Body of pancreas (tissue), 4 donors: ENCODE measurements at regions of chr2 and their contacts with region 1.

Region 1: GRCh38 chr2:234135720-234136221 is 85.3 kb downstream of the SPP2 start:
- DNase-seq: peak; percentile 50 to 58 (median 54)
- ATAC-seq: peak; percentile 72
- H3K4me3 ChIP-seq: no peak overlapping the region
- H3K27ac ChIP-seq: no peak overlapping the region
- H3K4me1 ChIP-seq: peaks cover 12% of the 10 kb centered on the region
- H3K27me3 ChIP-seq: no peaks in the 10 kb centered on the region
- CTCF ChIP-seq: peak; percentile 34 to 79 (median 74)
- POLR2A ChIP-seq: no peak

Region 2: GRCh38 chr2:234496835-234497591 is 361.2 kb after region 1 on chr2 and contains the start of gene ARL4C:
- intact Hi-C with region 1: loop called (anchors 5 kb)
- DNase-seq: peak; percentile 73 to 81 (median 76)
- ATAC-seq: peak; percentile 87
- H3K4me3 ChIP-seq: peak within 1 kb of the TSS; percentile 43 to 54
- H3K27ac ChIP-seq: peak within 1 kb of the TSS; percentile 13 to 84 (median 75)
- H3K4me1 ChIP-seq: peaks cover 10% of the 10 kb centered on the region
- H3K27me3 ChIP-seq: no peaks in the 10 kb centered on the region
- CTCF ChIP-seq: no peak
- POLR2A ChIP-seq: peak; percentile 40 to 62 (median 49)
- total RNA-seq, gene ARL4C: 6.6 to 7.8 TPM

Region 3: GRCh38 chr2:234544659-234545611 is 409.2 kb after region 1 on chr2:
- intact Hi-C with region 1: loop called (anchors 10 kb)
- DNase-seq: peak; percentile 54 to 74 (median 70)
- ATAC-seq: peak; percentile 83
- H3K4me3 ChIP-seq: no peak overlapping the region
- H3K27ac ChIP-seq: no peak overlapping the region
- H3K4me1 ChIP-seq: peaks cover 6% of the 10 kb centered on the region
- H3K27me3 ChIP-seq: no peaks in the 10 kb centered on the region
- CTCF ChIP-seq: peak; percentile 71 to 89 (median 76)
- POLR2A ChIP-seq: no peak